ENCODE measurements at regions of chr4 and their contacts with region 1.

Region 1: DNA sequence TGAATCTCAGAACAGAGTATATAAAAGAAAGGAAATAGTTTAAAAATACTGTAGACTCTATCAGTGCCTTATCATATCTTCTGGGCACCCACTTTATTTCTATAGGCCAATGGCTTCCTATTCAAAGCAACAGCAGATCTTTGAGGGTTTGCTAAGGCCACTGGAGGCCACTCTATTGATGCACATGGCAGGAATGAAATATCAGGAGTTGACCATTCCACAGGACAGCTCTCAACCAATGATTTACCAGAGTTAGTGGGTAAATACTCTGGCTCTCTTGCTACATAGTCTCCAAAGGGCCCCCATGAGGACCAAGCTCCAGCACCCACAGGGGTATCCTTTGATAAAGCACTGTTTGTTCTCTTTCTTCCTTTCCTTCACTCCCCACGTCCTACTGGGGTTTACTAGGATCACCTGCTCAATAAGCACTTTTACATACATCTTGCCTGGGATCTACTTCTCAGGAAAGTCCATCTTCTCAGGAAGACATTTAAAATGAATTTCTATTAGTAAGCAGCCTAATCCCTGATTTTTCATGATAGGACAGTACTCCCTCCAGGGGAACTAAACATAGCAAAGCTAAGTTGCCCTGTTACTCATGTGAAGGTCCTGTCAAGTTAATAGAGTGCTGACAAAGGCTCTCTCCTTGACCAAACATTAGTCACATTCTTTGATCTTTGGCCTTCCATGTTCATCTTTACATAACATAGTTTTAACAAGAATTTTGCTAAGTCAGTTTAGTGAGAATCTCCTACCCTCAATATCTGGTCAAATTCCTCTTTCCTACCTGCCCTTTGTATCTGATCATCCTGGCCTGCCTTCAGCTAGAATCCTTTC is 459.7 kb downstream of the GRXCR1 start:
- DNase-seq: peak; percentile 86
- ATAC-seq: peak; percentile 95
- H3K4me3 ChIP-seq: peak overlapping the region in 1 of 3 experiments; percentile 17; a peak in 1 of 6 replicates
- H3K27ac ChIP-seq: peak overlapping the region; percentile 63
- H3K4me1 ChIP-seq: peaks cover 60% of the 10 kb centered on the region
- H3K27me3 ChIP-seq: no peaks in the 10 kb centered on the region
- CTCF ChIP-seq: peak; percentile 67
- EP300 ChIP-seq: peak in 1 of 2 experiments; percentile 52; a peak in 1 of 4 replicates
- POLR2A ChIP-seq: no peak
- RAD21 ChIP-seq: no peak

Region 2: DNA sequence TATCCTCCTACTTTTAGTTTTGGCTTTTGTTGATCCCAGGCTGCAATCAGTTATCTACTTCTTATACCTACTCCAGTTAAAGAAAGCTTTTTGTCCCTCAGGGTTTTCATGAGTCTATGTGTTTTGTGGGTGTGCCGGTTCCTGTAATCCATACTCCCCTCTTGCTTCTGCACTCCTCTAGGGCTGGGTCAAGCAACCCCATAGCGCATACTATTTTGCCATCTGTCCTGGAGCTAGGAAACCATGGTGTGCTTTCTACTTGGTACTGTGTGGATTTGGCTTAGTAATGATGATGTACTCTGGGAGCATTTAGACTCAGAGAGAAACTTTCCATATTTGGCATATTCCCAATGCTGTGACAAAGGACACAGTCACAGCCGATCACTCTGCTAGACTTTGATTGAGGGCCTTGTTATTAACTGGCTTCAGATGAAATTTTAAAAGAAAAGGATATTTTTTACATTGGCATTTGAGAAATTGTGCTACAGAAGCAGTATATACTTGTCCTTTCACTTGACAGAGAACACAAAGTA is 545.8 kb before region 1 on chr4:
- CTCF ChIA-PET with region 1: no interaction called
- POLR2A ChIA-PET with region 1: no interaction called
- in situ Hi-C with region 1: no loop called
- intact Hi-C with region 1: no loop called
- DNase-seq: no peak
- ATAC-seq: no peak
- H3K4me3 ChIP-seq: no peak overlapping the region
- H3K27ac ChIP-seq: no peak overlapping the region
- H3K4me1 ChIP-seq: no peaks in the 10 kb centered on the region
- H3K27me3 ChIP-seq: no peaks in the 10 kb centered on the region
- CTCF ChIP-seq: no peak
- EP300 ChIP-seq: no peak
- POLR2A ChIP-seq: no peak
- RAD21 ChIP-seq: no peak

Region 3: GRCh38 chr4:43456383-43456782 is 104.2 kb after region 1 on chr4:
- CTCF ChIA-PET with region 1: no interaction called
- POLR2A ChIA-PET with region 1: no interaction called
- in situ Hi-C with region 1: no loop called
- intact Hi-C with region 1: loop called (anchors 5 kb)
- DNase-seq: no peak
- ATAC-seq: no peak
- H3K4me3 ChIP-seq: no peak overlapping the region
- H3K27ac ChIP-seq: no peak overlapping the region
- H3K4me1 ChIP-seq: no peaks in the 10 kb centered on the region
- H3K27me3 ChIP-seq: no peaks in the 10 kb centered on the region
- CTCF ChIP-seq: no peak
- EP300 ChIP-seq: no peak
- POLR2A ChIP-seq: no peak
- RAD21 ChIP-seq: no peak

Region 4: DNA sequence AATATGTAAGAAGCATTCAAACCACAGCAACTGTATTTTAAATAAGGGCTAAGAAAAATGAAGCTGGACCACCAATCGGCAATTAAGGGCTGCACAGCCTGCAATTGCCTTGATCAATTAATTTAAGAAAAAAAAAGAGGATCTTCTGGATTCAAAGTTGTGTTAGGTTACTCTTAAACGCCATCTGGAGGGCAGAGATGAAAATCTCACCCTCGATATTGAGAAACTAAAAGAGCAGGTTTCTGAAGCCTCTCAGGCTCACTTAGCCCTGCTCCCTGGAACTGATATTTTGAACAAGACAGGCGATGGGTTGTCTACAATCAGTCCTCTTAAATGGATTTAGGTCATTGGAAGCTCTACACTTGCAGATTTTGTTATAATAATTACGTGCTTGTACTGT is 119.8 kb after region 1 on chr4:
- CTCF ChIA-PET with region 1: no interaction called
- POLR2A ChIA-PET with region 1: no interaction called
- in situ Hi-C with region 1: no loop called
- intact Hi-C with region 1: loop called (anchors 1 kb)
- DNase-seq: peak; percentile 30
- ATAC-seq: peak; percentile 80
- H3K4me3 ChIP-seq: peak overlapping the region in 2 of 3 experiments; percentile 32 to 41; a peak in 4 of 6 replicates
- H3K27ac ChIP-seq: no peak overlapping the region
- H3K4me1 ChIP-seq: no peaks in the 10 kb centered on the region
- H3K27me3 ChIP-seq: no peaks in the 10 kb centered on the region
- CTCF ChIP-seq: peak; percentile 53
- EP300 ChIP-seq: no peak
- POLR2A ChIP-seq: no peak
- RAD21 ChIP-seq: no peak

Measured in HepG2 (cell line).